ENCODE measurements at regions of chr5 and their contacts with region 1.

Region 1: DNA sequence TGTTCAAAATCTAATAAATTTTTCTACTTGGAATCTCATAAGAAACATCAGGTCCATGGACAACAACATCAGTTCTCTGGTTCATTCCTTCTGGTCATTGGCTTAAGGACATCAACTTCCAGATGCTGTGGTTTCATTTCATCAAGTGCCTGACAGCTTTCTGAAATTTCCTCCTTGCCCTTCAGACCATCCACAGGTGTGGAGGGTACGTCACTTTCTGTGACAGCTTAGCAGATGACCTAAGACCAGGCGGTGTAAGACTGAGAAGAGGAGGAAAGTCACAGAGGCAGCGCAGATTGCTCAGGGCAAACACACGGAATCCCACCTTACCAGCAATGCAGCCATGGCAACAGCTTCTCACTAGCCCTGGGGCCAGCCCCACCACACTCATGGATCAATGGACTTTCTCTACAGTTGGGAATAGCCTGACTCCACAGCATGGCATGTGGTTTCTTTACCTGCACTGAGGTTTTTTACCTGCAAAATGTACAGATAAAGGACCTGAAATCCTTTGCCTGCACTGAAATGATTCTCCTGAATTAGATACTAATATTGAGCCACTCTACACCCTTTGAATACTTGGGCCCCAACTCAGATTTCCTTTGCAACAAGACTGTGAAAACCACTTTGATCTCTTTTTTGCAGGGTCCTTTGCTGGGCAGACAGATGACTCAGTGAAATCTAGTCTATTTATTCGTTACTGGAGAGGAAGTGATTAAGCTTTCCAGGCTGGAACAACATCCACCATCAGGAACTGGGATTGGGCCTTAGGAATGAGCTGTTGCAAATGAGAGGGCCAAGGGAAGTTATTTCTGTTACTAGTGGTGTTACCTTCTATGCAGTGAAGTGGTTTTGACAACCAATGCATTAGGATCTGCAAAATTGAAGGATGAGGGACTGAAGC is 26.9 kb downstream of the TICAM2 start:
- DNase-seq: no peak
- H3K4me3 Mint-ChIP-seq: no peak overlapping the region
- H3K27ac Mint-ChIP-seq: no peak overlapping the region
- H3K4me1 Mint-ChIP-seq: peaks cover 2% of the 10 kb centered on the region
- H3K27me3 Mint-ChIP-seq: peaks cover 11% of the 10 kb centered on the region

Region 2: DNA sequence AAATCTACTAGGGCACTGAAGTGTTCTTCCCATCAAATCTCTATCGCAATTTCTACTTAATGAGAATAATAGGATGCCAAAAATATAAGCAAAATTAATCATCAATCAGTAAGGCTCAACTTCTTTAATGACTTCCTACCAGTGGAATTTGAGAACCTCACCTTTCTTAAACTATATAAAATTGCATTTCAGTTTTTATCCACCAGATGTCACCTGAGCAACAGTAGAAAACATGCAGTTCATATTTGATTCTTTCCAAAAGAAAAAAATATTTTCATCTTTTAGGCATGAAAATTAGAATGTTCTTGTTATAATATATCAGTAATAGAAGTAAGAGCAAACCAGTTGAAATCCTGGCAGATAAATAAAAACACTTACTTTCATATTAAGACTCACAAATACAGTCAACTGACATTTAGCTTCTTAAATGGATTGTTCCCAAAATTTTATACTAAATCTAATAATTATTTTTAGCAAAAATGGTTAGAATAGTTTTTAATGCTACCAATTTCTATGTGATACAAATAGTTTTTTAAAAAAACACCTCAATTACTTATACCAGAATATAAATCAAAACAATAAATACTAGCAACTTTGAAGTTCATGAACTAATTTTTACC is 265.6 kb before region 1 on chr5:
- CTCF ChIA-PET with region 1: interaction called, 149 read pairs
- POLR2A ChIA-PET with region 1: no interaction called
- DNase-seq: no peak
- H3K4me3 Mint-ChIP-seq: no peak overlapping the region
- H3K27ac Mint-ChIP-seq: no peak overlapping the region
- H3K4me1 Mint-ChIP-seq: no peaks in the 10 kb centered on the region
- H3K27me3 Mint-ChIP-seq: peaks cover 37% of the 10 kb centered on the region

Region 3: DNA sequence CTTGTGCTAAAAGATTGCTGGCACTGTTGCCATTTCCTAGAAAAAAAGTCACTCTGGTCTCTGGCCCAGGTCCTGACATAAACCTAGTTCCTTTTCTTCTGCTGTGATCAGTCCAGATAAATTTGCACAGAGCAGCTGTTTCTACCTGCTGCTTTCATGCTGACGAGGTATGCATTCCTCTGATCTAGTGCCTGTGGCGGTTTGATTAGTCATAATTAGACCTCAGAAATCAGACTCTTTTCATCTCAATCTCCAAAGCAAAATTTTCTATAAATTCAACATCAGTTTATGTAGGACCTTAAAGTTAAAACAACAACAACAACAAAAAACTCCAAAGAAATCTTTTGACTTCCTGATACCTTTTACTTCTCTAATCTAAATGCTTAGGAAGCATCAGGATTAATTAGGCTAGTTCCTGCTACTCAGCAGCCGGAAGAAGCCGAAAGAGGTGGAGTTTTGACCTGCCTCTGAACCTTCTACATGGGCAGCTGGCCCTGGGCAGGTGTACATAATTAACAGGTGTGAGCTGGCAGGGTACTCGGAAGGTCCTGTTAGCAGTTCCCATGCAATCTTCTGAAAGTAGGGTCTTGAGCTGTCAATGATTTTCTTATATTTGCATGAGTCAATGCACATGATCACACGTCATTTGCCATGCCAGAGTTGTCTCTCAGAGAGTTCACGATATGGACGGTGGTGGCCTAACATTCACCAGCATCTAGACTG is 195.6 kb before region 1 on chr5:
- CTCF ChIA-PET with region 1: interaction called, 13 read pairs
- POLR2A ChIA-PET with region 1: no interaction called
- DNase-seq: peak; percentile 25
- H3K4me3 Mint-ChIP-seq: no peak overlapping the region
- H3K27ac Mint-ChIP-seq: peak overlapping the region; percentile 17
- H3K4me1 Mint-ChIP-seq: peaks cover 33% of the 10 kb centered on the region
- H3K27me3 Mint-ChIP-seq: no peaks in the 10 kb centered on the region